Psoas muscle (tissue), 8 donors: ENCODE measurements at regions of chr1 and their contacts with region 1.

Region 1: GRCh38 chr1:117367047-117368018 is at the start of gene MAN1A2:
- DNase-seq: peak; percentile 89 to 95
- ATAC-seq: peak; percentile 89 to 91 (median 90)
- H3K4me3 ChIP-seq: peak within 1 kb of the TSS; percentile 71
- H3K27ac ChIP-seq: peak within 1 kb of the TSS; percentile 95
- H3K4me1 ChIP-seq: peaks cover 22% of the 10 kb centered on the region
- H3K27me3 ChIP-seq: no peaks in the 10 kb centered on the region
- CTCF ChIP-seq: no peak
- total RNA-seq, gene MAN1A2: 19.8 to 35.0 (median 27.0) TPM

Region 2: DNA sequence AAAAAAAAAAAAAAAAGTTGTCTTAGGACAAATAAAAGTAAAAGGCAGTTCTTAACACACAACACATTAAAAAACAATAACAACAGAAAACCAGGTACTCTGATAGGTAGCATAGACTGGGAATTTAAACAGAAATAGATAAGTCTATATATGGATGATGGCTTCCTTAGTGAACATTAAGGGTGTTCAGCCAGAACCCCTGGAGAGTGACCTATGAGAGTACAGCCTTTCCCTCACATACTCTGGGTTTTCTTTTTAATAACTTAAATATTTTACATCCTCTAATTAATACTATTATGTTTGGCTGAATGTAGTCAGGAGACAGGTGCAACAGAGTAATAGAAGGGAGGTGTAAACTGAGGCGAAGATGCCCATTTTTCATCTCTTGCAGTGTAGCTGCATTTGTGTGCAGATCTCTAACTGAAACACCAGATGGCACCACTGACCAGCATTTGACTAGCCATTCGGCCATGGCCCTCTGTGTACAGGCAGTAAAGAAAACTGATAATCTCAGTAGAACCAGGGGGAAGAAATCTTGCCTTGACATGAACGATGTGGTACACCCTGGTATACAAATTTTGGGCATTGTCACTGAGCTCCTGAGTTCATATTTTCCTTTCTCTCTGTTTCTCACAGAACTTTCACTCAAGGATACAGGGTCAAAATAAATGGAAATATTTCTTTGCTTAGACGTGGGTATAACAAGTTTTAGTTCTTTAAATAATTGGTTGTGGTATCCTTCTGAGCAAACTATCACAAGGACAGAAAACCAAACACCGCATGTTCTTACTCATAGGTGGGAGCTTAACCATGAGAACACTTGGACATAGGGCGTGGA is 299.6 kb before region 1 on chr1:
- intact Hi-C with region 1: loop called in 1 of 2 experiments (anchors 5 kb)
- DNase-seq: peak; percentile 37 to 72
- ATAC-seq: peak; percentile 89 to 98 (median 96)
- H3K4me3 ChIP-seq: no peak overlapping the region
- H3K27ac ChIP-seq: no peak overlapping the region
- H3K4me1 ChIP-seq: peaks cover 2% of the 10 kb centered on the region
- H3K27me3 ChIP-seq: no peaks in the 10 kb centered on the region
- CTCF ChIP-seq: peak; percentile 89

Region 3: DNA sequence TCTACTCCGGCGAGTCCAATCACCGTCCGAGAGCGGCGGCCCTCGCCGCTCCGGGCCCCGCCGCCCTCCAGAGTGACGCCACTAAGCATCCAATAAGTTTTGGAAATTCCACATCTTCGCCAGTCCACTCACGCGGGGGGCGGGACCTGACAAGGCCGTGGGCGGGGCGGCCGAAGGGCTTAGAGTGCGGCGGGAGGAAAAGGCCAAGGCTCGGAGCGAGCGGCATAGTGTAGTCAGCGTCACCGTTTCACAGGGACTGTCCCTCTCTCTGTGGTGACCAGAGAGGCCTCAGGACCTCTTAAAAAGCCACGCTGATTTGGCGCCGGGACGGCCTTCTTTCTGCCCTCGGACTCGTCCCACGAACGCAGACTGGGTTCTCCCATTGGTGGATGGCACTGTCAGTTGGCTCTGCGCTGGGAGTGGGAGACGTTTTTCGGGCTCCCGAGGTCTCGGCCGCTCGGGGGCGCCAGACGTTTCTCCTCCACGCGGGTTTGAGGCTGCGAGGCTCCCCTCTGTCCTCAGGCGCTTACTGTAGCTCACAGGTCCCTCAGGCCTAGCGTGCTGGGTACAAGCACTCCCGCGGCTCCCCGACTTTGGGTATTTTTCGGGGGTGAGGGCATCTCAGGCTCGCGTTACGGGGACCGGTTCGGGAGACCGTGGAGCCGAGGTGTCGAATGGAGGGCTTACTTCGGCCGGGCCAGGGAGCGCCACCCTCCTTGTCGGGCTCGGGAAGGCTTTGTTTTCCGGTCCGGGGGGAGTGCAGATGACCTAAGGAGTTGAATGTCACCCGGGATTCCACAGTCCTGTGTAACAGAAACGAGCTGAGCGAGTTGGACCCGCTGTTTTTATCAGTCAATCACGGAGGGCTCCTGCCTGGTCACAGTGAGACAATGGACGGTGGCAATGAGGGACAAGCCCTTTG is 245.3 kb before region 1 on chr1:
- intact Hi-C with region 1: loop called in 1 of 2 experiments (anchors 5 kb)
- DNase-seq: peak; percentile 97 to 98
- ATAC-seq: peak; percentile 90 to 95 (median 92)
- H3K4me3 ChIP-seq: peak overlapping the region; percentile 78
- H3K27ac ChIP-seq: peak overlapping the region; percentile 95
- H3K4me1 ChIP-seq: peaks cover 42% of the 10 kb centered on the region
- H3K27me3 ChIP-seq: no peaks in the 10 kb centered on the region
- CTCF ChIP-seq: peak; percentile 73

Region 4: GRCh38 chr1:117146570-117147346 is 220.6 kb before region 1 on chr1:
- intact Hi-C with region 1: loop called in 1 of 2 experiments (anchors 5 kb)
- DNase-seq: peak in 1 of 2 donors; percentile 60
- ATAC-seq: peak; percentile 84 to 92 (median 89)
- H3K4me3 ChIP-seq: peak overlapping the region; percentile 39
- H3K27ac ChIP-seq: peak overlapping the region; percentile 88
- H3K4me1 ChIP-seq: peaks cover 11% of the 10 kb centered on the region
- H3K27me3 ChIP-seq: no peaks in the 10 kb centered on the region
- CTCF ChIP-seq: no peak

Region 5: DNA sequence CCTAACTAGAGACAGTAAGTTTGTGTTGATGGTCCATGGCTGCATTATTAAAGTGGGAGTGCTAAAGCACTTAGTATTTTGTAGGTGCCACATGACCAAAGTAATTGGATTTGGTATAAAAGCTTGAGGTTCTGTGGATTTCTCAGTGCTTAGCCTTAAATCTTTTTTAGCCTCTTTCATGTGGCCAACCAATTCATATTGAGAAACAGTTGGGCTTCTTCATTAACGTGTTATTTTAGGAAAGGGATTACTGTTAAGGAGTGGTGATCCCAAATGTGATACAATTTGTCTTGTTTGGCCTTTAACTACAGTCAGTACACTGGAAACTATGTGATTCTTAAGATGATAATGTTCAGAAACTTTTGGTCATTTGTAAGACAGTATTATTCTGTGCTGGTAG is 25.4 kb after region 1 on chr1:
- intact Hi-C with region 1: no loop called
- DNase-seq: no peak
- ATAC-seq: peak in 1 of 4 donors; percentile 27
- H3K4me3 ChIP-seq: no peak overlapping the region
- H3K27ac ChIP-seq: no peak overlapping the region
- H3K4me1 ChIP-seq: peaks cover 53% of the 10 kb centered on the region
- H3K27me3 ChIP-seq: no peaks in the 10 kb centered on the region
- CTCF ChIP-seq: no peak

Region 6: GRCh38 chr1:117605774-117606648 is 238.7 kb after region 1 on chr1 and contains the start of gene TENT5C:
- intact Hi-C with region 1: loop called in 1 of 2 experiments (anchors 5 kb)
- DNase-seq: peak; percentile 97 to 98
- ATAC-seq: peak; percentile 94 to 98 (median 95)
- H3K4me3 ChIP-seq: peak within 1 kb of the TSS; percentile 93
- H3K27ac ChIP-seq: peak within 1 kb of the TSS; percentile 91
- H3K4me1 ChIP-seq: peaks cover 11% of the 10 kb centered on the region
- H3K27me3 ChIP-seq: no peaks in the 10 kb centered on the region
- CTCF ChIP-seq: peak; percentile 7
- total RNA-seq, gene TENT5C: 3.1 to 31.4 (median 15.9) TPM